ENCODE measurements at regions of chr3 and their contacts with region 1.

Region 1: DNA sequence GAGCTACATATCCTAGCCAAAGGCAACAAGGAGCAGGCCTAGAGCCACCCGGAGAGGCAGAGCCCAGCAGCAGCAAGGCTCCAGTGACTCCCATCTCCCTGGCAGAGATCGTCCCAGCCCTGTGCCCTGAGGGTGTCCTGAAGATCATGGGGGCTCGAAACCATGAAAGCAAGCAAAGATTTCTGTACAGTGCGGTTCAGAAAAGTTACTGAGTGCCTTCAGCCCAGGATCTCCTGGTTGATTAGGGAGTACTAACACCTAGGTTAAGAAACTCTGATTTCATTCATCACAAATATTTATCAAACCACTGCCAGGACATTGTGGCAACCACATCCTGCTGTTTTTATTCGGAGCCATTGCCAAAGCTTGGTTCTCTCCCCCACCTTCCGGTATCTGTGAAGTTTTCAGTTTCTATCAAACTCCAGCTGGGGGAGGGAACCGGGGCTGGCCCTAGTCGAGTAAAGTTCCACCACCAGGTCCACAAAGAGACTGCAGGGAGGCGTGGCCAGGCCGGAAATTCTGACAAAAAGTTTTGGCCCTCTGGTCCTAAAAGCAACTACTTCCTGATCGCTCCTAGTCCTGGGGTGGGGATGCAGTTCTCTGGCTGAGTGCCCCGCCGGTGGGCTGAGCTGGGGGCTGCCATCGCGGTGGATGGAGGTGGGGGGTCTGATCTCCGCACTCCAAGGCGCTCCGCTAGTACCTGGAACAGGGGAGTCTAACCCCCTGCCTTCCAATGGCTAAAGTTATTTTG is 1.2 kb downstream of the RAB43 start:
- DNase-seq: peak; percentile 73 to 96 (median 87)
- ATAC-seq: peak; percentile 51 to 60
- H3K4me3 Mint-ChIP-seq: peak overlapping the region; percentile 83 to 99 (median 94)
- H3K27ac Mint-ChIP-seq: peak overlapping the region; percentile 88 to 99 (median 98)
- H3K4me1 Mint-ChIP-seq: peaks cover 21 to 68% (median 37%) of the 10 kb centered on the region in 4 donors
- H3K27me3 Mint-ChIP-seq: no peaks in the 10 kb centered on the region

Region 2: GRCh38 chr3:129003578-129004160 is 116.8 kb before region 1 on chr3:
- POLR2A ChIA-PET with region 1: interaction called, 14 read pairs
- DNase-seq: peak; percentile 32 to 75 (median 57)
- ATAC-seq: peak; percentile 80 to 90
- H3K4me3 Mint-ChIP-seq: peak overlapping the region in 9 of 10 donors; percentile 48 to 91 (median 74)
- H3K27ac Mint-ChIP-seq: no peak overlapping the region
- H3K4me1 Mint-ChIP-seq: peaks cover 22 to 59% (median 53%) of the 10 kb centered on the region in 4 donors
- H3K27me3 Mint-ChIP-seq: peaks cover 8 to 23% (median 17%) of the 10 kb centered on the region in 5 donors

Region 3: GRCh38 chr3:129052675-129053074 is 67.8 kb before region 1 on chr3:
- POLR2A ChIA-PET with region 1: interaction called, 57 read pairs
- DNase-seq: no peak
- ATAC-seq: no peak
- H3K4me3 Mint-ChIP-seq: no peak overlapping the region
- H3K27ac Mint-ChIP-seq: peak overlapping the region in 1 of 10 donors; percentile 84
- H3K4me1 Mint-ChIP-seq: peaks cover 7 to 11% (median 9%) of the 10 kb centered on the region in 4 donors
- H3K27me3 Mint-ChIP-seq: peaks cover 0 to 4% (median 0%) of the 10 kb centered on the region in 5 donors

Region 4: DNA sequence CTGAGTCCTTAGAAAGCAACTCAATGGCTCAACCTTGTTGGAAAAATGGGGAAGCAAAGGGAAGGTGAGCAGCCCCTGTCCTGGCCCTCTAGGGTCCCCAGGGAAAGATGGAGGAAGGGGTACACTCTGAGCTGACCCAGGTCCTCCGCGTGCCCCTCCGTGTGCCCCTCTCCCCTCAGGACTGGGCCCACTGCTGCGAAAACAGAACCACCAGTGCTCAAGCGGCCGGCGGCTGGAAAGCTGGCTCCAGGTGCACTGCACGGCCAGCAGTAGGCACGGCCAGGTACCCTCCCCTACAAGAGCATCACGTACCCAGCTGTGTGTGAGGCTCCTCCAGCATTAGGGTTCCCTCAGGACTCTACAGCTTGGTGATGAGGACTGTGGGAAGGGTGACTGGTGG is 25.1 kb before region 1 on chr3:
- POLR2A ChIA-PET with region 1: interaction called, 81 read pairs
- DNase-seq: no peak
- ATAC-seq: no peak
- H3K4me3 Mint-ChIP-seq: no peak overlapping the region
- H3K27ac Mint-ChIP-seq: peak overlapping the region in 6 of 10 donors; percentile 3 to 91 (median 80)
- H3K4me1 Mint-ChIP-seq: peaks cover 19 to 44% (median 35%) of the 10 kb centered on the region in 4 donors
- H3K27me3 Mint-ChIP-seq: no peaks in the 10 kb centered on the region

Region 5: GRCh38 chr3:129183569-129184395 is 63.4 kb after region 1 on chr3 and contains the start of gene CNBP:
- POLR2A ChIA-PET with region 1: interaction called, 93 read pairs
- DNase-seq: peak; percentile 87 to 96 (median 93)
- ATAC-seq: peak; percentile 95 to 97
- H3K4me3 Mint-ChIP-seq: peak within 1 kb of the TSS; percentile 91 to 99 (median 96)
- H3K27ac Mint-ChIP-seq: peak within 1 kb of the TSS; percentile 92 to 100 (median 98)
- H3K4me1 Mint-ChIP-seq: peaks cover 14 to 50% (median 37%) of the 10 kb centered on the region in 4 donors
- H3K27me3 Mint-ChIP-seq: no peaks in the 10 kb centered on the region
- polyA plus RNA-seq, gene CNBP: 843 to 960 (median 927) TPM

Measured in naive thymus-derived CD8-positive, alpha-beta T cell (primary cell).